Activated T-helper 1 cell treated with anti-CD3 and anti-CD28 coated beads, Interleukin-12 subunit alpha, Interleukin-12 subunit beta, Interleukin-2, Interleukin-4 antibody, amounts not matched to agents 30 ng/mL and 10 ng/mL and 1 ng/mL, durations not matched to agents 14 hours and 24 hours and 36 hours (primary cell): ENCODE measurements at regions of chr12 and their contacts with region 1.

Region 1: GRCh38 chr12:68497702-68498101 is 113.0 kb upstream of the RAP1B start:
- DNase-seq: no peak
- H3K4me3 Mint-ChIP-seq: peak overlapping the region; percentile 66
- H3K27ac Mint-ChIP-seq: peak overlapping the region; percentile 94
- H3K4me1 Mint-ChIP-seq: peaks cover 40% of the 10 kb centered on the region
- H3K27me3 Mint-ChIP-seq: no peaks in the 10 kb centered on the region

Region 2: DNA sequence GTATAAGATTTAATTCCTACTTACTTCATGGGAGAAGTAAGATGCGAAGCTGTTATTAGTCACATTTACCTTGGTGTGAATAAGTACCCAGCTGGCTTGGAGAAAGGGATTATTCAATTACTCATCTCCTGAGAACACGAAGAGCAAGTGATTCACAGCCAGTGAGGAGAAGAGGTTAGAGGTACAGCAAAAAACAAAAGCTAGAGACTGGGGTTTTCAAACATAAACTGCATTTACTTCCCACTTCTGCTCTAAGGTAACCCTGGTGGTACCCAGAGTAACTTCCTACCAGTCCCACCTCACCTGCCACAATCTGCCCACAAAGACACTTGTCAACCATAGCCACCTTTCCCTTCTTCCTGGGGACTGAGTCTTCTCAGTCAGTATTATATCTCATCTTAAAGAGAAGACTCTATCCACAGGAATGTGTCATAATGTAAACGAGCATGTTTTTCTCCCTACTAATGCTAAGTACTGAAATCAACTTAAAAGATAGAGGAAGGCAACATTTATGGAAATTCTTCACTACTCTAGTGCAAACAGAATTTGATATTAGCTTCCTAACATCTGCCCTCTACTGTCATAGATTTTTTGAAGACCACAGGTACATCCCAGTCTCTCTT is 238.3 kb before region 1 on chr12:
- intact Hi-C with region 1: loop called (anchors 1 kb)
- DNase-seq: peak; percentile 31
- H3K4me3 Mint-ChIP-seq: peak overlapping the region; percentile 12
- H3K27ac Mint-ChIP-seq: peak overlapping the region; percentile 69
- H3K4me1 Mint-ChIP-seq: peaks cover 68% of the 10 kb centered on the region
- H3K27me3 Mint-ChIP-seq: peaks cover 19% of the 10 kb centered on the region

Region 3: GRCh38 chr12:68374307-68374982 is 123.3 kb before region 1 on chr12:
- intact Hi-C with region 1: loop called (anchors 1 kb)
- DNase-seq: peak; percentile 60
- H3K4me3 Mint-ChIP-seq: peak overlapping the region; percentile 31
- H3K27ac Mint-ChIP-seq: peak overlapping the region; percentile 93
- H3K4me1 Mint-ChIP-seq: peaks cover 68% of the 10 kb centered on the region
- H3K27me3 Mint-ChIP-seq: no peaks in the 10 kb centered on the region

Region 4: GRCh38 chr12:68538726-68539614 is 41.3 kb after region 1 on chr12:
- intact Hi-C with region 1: loop called (anchors 1 kb)
- DNase-seq: peak; percentile 54
- H3K4me3 Mint-ChIP-seq: peak overlapping the region; percentile 23
- H3K27ac Mint-ChIP-seq: peak overlapping the region; percentile 52
- H3K4me1 Mint-ChIP-seq: peaks cover 48% of the 10 kb centered on the region
- H3K27me3 Mint-ChIP-seq: peaks cover 2% of the 10 kb centered on the region

Region 5: DNA sequence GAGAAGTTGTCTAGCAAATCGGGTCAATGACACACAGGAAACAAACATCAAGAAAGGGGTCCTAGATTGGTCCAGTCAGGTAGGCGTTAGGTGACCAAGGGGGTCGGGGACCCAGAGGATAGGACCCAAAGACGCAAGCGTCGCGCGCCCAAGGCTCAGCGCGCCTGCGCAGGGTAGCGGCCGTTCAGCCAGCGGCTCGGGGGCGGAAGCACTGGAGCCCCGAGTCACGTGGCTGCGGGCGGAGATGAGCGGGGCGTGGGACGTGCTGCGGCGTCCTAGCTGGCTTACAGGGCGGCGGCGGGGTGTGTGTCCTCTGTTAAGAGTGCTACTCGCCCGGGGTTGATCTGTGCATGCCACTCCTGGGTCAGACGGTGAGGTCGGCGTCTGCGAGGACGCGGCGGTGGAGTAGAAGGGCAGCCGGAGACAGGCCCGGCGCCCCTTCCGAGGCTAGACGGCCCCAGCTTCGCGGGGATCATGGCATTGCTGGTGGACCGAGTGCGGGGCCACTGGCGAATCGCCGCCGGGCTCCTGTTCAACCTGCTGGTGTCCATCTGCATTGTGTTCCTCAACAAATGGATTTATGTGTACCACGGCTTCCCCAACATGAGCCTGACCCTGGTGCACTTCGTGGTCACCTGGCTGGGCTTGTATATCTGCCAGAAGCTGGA is 248.3 kb after region 1 on chr12 and contains the start of gene SLC35E3:
- intact Hi-C with region 1: loop called (anchors 10 kb)
- DNase-seq: peak; percentile 91
- H3K4me3 Mint-ChIP-seq: peak within 1 kb of the TSS; percentile 94
- H3K27ac Mint-ChIP-seq: peak within 1 kb of the TSS; percentile 87
- H3K4me1 Mint-ChIP-seq: peaks cover 50% of the 10 kb centered on the region
- H3K27me3 Mint-ChIP-seq: no peaks in the 10 kb centered on the region
- total RNA-seq, gene SLC35E3: 5.9 and 6.3 TPM in 2 replicates